Right cardiac atrium (tissue), 5 donors: ENCODE measurements at regions of chr16 and their contacts with region 1.

Region 1: GRCh38 chr16:30829130-30830071 is 42.4 kb upstream of the ZNF629 start:
- DNase-seq: no peak
- ATAC-seq: no peak
- H3K4me3 ChIP-seq: no peak overlapping the region
- H3K27ac ChIP-seq: no peak overlapping the region
- H3K4me1 ChIP-seq: no peaks in the 10 kb centered on the region
- H3K27me3 ChIP-seq: no peaks in the 10 kb centered on the region

Region 2: DNA sequence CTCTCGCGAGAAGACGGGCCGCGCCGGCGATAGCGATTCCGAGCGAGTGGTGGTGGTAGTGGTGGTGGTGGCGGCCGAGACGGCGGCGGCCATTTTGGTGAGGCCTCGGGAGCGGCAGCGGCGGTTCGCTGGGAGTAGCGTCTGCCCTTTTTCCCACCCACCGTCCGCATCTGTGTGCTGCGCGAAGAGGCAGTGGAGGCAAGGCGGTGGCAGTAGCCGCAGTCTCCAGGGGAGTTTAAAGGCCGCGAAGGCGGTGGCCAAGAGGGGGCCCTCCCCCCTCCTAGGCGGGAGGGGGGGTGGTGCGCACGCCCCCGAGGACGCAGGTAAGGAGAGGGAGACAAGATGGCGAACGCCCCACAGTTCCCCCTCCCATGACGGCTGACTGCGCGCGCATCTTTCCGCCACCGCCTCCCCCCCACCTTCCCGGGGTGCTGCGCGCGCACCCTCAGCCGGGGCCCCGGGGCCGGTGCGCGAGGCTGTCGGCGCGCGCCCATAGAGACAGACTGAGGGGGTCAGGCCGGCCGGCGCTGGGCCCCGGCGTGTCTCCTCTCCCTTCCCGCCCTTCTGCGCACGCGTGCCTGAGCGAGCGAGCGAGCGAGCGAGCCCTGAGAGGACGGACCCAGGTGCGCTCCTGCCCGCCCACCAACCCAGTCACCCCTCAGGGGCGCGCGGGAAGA is 131.1 kb before region 1 on chr16:
- intact Hi-C with region 1: no loop called
- DNase-seq: peak; percentile 99 to 100 (median 99)
- ATAC-seq: peak; percentile 89 to 91
- H3K4me3 ChIP-seq: peak overlapping the region; percentile 85
- H3K27ac ChIP-seq: peak overlapping the region; percentile 98
- H3K4me1 ChIP-seq: peaks cover 2% of the 10 kb centered on the region
- H3K27me3 ChIP-seq: no peaks in the 10 kb centered on the region

Region 3: DNA sequence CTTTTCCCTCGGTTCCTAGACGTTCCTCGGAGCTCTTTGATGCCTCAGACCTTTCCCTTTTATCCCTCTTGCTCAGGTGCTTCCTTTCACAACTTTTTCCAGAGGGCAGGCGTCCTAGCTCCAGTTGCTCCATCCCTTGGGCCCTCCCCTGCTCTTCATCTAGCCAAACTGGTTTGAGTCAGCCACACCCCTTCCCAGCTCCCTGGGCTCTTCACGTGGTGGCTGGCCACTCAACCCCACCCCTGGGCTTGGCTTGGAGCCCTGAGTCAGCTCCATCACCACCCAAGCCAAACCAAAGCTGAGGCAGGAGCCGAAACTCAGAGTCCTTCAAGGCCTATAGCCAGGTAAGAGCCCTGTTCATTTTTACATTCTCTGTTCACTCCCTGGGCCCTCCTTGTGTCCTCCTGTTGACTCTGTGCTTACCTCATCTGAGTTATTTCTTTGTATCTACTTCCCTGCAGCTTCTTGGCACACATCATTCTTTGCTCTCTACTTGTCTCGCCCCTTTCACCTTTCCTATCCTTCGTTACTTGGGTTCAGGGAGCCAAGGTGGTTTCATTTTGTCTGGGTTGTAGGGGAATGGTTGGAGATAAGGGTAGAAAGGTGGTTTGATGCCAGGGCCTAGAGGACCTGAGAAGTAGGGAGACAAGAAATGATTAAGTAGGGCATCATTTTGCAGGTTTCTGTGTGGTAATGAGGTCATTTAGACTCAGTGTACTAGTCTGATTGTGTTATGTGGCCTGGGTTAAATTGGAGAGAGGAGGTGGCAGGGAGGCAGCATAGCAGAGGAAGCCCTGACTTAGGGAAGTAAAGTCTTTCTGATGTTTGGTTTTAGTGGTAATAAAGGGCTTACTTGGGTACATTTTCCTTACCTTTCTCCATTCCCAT is 88.8 kb before region 1 on chr16:
- intact Hi-C with region 1: no loop called
- DNase-seq: peak; percentile 91 to 94 (median 91)
- ATAC-seq: peak; percentile 87 to 88
- H3K4me3 ChIP-seq: no peak overlapping the region
- H3K27ac ChIP-seq: peak overlapping the region; percentile 22
- H3K4me1 ChIP-seq: peaks cover 6% of the 10 kb centered on the region
- H3K27me3 ChIP-seq: no peaks in the 10 kb centered on the region

Region 4: GRCh38 chr16:30910427-30911029 is 81.1 kb after region 1 on chr16:
- intact Hi-C with region 1: loop called in 1 of 4 experiments (anchors 10 kb)
- DNase-seq: peak in 1 of 3 donors; percentile 38
- ATAC-seq: peak in 1 of 2 donors; percentile 20
- H3K4me3 ChIP-seq: no peak overlapping the region
- H3K27ac ChIP-seq: no peak overlapping the region
- H3K4me1 ChIP-seq: no peaks in the 10 kb centered on the region
- H3K27me3 ChIP-seq: no peaks in the 10 kb centered on the region